GM18951 (cell line): ENCODE measurements at regions of chr6 and their contacts with region 1.

Region 1: DNA sequence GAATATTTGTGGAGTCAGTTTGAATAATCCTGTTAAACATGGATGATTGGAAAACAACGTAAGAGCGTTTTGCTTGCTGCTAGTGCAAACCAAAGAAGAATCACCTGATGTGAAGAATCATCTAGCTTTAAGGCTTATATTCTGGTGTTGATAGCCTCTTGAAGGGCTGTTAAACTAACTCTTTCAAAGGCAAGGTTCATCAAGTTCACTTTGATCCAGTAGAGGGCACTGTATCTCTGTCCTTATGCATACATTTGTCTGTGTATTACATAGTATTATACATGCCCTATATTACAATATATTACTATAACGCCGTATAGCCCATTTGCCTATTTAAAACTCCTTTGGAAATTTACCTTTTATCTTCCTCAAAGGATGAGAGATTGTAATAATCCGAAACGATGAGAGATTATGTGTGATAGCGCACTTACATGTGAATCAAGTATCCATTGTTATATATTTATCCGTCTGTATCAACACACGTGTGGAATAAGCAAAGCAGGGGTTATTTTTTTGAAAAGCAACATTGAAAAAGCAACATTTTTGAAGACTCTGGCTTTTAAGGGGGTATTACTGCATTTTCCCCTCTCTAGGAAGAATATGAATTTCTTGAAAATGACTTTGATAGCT is 50.8 kb upstream of the NRN1 start:
- POLR2A ChIP-seq: no peak

Region 2: GRCh38 chr6:6556738-6557505 is 499.4 kb after region 1 on chr6:
- in situ Hi-C with region 1: loop called (anchors 10 kb)
- POLR2A ChIP-seq: no peak

Region 3: DNA sequence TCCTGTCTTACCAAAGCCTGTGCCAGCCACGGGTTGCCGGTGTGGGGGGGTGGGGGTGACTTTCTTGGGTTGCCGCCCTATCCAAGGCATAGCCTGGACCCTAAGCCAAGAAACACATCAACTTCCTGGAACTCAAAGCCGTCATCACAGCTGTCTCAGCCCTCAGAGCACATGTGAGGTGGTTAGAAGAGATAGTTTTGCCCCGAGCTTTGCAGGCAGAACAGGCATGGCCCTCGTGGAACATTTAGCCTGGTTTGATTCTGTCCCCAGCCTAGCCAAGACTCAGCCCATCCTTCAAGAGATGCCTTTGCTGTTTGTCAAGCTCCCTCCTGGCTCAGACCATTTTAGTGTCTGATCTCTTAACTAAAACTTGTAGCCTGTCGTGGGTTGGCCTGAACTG is 1115.1 kb after region 1 on chr6:
- in situ Hi-C with region 1: no loop called
- POLR2A ChIP-seq: no peak